ENCODE measurements at regions of chr1 and their contacts with region 1.

Region 1: DNA sequence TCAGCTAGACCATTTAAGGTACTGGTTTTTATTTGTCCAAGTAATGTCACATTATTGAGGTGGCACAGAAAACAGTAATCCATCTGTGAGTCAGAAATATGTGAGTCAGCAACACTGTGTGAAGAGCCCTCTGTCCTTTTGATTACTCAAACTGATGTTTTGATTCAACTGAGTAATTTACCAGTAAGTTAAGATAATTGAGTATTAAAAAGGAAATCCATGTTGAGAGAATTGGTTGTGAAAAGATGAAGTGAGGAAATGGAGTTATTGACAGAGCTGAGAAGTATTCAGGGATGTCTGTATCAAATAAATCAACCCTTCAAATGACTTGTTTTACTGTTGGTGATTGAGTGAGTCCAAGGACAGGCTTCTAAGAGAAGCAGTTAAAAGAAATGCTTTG is 302.7 kb upstream of the SGIP1 start:
- DNase-seq: no peak
- ATAC-seq: no peak
- H3K4me3 ChIP-seq: no peak overlapping the region
- H3K4me3 Mint-ChIP-seq: no peak overlapping the region
- H3K27ac ChIP-seq: no peak overlapping the region
- H3K27ac Mint-ChIP-seq: no peak overlapping the region
- H3K4me1 ChIP-seq: no peaks in the 10 kb centered on the region
- H3K4me1 Mint-ChIP-seq: no peaks in the 10 kb centered on the region
- H3K27me3 ChIP-seq: peaks cover 0 to 5% of the 10 kb centered on the region in 2 experiments
- H3K27me3 Mint-ChIP-seq: no peaks in the 10 kb centered on the region
- CTCF ChIP-seq: no peak

Region 2: DNA sequence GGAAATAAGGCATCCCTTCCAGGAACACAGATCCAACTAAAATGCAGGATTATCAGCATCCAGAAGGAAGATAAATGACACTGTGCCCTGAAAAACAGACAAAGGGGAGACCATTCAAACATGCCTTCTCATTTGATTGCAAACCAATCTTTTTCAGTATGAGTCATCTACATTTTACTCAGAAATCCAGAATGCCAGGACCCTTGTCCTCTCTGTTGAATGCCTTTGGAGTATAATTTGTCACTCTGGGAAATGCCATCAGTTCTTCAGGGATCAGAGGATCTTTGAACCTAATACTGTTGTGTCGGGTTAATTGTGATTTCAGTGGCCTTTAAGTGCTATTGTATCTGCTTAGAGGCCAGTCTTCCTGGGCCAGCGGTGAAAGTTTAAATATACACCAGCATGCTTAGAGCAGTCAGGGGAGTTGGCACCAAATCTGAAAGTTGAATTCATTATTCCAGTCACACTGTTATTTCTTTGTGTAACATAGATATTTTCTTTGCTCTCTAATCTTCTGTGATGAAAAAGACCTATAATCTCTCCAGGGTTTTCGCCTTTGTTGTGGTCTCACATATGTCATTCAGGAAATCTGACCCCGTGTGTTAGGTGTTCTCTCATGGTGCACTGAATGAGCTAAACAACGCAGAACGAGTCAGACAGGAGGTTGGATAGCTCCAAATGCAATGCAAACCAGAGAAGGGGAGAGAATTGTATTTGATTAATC is 62.1 kb before region 1 on chr1:
- CTCF ChIA-PET with region 1: no interaction called
- POLR2A ChIA-PET with region 1: no interaction called
- intact Hi-C with region 1: loop called in 1 of 2 experiments (anchors 10 kb)
- DNase-seq: peak in 4 of 14 experiments; percentile 5 to 29 (median 16)
- ATAC-seq: peak; percentile 84
- H3K4me3 ChIP-seq: no peak overlapping the region
- H3K4me3 Mint-ChIP-seq: no peak overlapping the region
- H3K27ac ChIP-seq: no peak overlapping the region
- H3K27ac Mint-ChIP-seq: no peak overlapping the region
- H3K4me1 ChIP-seq: no peaks in the 10 kb centered on the region
- H3K4me1 Mint-ChIP-seq: peaks cover 15% of the 10 kb centered on the region
- H3K27me3 ChIP-seq: no peaks in the 10 kb centered on the region
- H3K27me3 Mint-ChIP-seq: peaks cover 7% of the 10 kb centered on the region
- CTCF ChIP-seq: no peak

Measured in CD4-positive, alpha-beta T cell (primary cell).